ENCODE measurements at regions of chr5 and their contacts with region 1.

Region 1: DNA sequence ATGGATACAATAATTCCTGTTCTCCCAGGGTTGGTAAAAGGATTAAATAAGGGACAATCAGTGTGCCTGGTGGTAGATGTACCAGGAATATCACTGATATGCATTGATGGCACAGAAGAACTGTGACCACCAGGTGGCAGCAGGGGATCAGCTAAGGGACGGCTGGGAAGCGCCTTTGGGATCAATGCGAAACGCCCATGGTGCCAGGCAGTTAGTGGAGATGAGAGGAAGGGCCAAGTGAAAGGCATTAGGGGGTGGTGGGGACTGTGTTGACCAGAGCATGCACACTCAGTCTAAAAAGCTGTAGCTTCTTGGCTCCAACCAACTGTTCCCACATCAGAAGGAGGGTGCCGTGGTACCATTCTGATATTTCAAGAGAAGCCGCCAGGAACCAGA is 55.6 kb downstream of the ARHGEF37 start:
- DNase-seq: no peak
- H3K4me3 ChIP-seq: no peak overlapping the region
- H3K27ac ChIP-seq: no peak overlapping the region
- H3K4me1 ChIP-seq: peaks cover 25 to 36% (median 30%) of the 10 kb centered on the region in 4 donors
- H3K27me3 ChIP-seq: no peaks in the 10 kb centered on the region
- CTCF ChIP-seq: peak; percentile 70 to 96 (median 83)
- EP300 ChIP-seq: no peak
- POLR2A ChIP-seq: no peak

Region 2: GRCh38 chr5:149381987-149382340 is 254.9 kb before region 1 on chr5:
- in situ Hi-C with region 1: no loop called
- intact Hi-C with region 1: no loop called
- DNase-seq: peak; percentile 83
- H3K4me3 ChIP-seq: peak overlapping the region in 2 of 4 donors; percentile 8 to 27
- H3K27ac ChIP-seq: peak overlapping the region; percentile 87 to 91 (median 88)
- H3K4me1 ChIP-seq: peaks cover 4 to 44% (median 22%) of the 10 kb centered on the region in 4 donors
- H3K27me3 ChIP-seq: no peaks in the 10 kb centered on the region
- CTCF ChIP-seq: peak; percentile 90 to 96 (median 94)
- EP300 ChIP-seq: no peak
- POLR2A ChIP-seq: no peak

Region 3: GRCh38 chr5:149852641-149853330 is 215.9 kb after region 1 on chr5:
- in situ Hi-C with region 1: loop called in 1 of 4 experiments (anchors 10 kb)
- intact Hi-C with region 1: loop called (anchors 5 kb)
- DNase-seq: peak; percentile 83
- H3K4me3 ChIP-seq: no peak overlapping the region
- H3K27ac ChIP-seq: peak overlapping the region; percentile 7 to 56 (median 30)
- H3K4me1 ChIP-seq: peaks cover 22 to 61% (median 39%) of the 10 kb centered on the region in 4 donors
- H3K27me3 ChIP-seq: no peaks in the 10 kb centered on the region
- CTCF ChIP-seq: peak; percentile 83 to 89 (median 86)
- EP300 ChIP-seq: no peak
- POLR2A ChIP-seq: no peak

Region 4: DNA sequence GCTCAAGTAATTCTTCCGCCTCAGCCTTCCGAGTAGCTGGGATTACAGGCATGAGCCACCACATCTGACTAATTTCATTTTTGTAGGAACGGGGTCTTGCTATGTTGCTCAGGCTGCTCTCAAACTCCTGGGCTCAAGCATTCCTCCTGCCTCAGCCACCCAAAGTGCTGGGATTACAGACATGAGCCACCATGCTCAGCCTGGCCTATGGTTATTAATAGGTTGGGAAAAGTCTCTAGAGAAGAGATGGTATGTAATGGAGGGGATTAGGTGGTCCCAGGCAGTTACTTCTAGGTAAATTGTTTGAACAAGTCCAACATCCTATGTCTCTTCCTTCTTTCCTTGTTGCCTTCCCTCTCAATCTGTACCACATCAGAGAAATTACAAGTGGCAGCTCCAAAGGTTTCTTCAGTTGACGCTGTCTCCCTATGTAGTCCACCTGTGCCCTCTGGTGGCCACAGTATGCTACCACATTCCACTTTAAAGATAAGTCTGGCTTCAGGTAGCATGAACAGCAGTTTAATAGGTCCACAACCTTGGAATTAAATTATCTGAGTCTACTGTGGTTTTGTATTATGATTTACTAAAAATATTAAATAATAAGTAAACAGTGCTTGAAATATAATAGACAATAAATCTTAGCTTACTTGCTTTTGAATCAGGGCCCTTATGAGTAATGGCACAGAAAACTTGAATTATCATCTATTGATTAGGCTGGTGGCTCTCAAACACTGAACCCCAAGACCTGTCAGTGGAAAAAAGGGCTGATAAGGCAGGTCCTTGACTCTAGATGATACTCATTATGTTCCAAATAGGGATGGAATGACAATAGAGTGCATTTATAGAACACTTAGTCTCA is 353.9 kb after region 1 on chr5:
- in situ Hi-C with region 1: loop called (anchors 10 kb)
- intact Hi-C with region 1: loop called (anchors 5 kb)
- DNase-seq: peak; percentile 83
- H3K4me3 ChIP-seq: no peak overlapping the region
- H3K27ac ChIP-seq: peak overlapping the region in 1 of 4 donors; percentile 6
- H3K4me1 ChIP-seq: peaks cover 0 to 5% (median 2%) of the 10 kb centered on the region in 4 donors
- H3K27me3 ChIP-seq: no peaks in the 10 kb centered on the region
- CTCF ChIP-seq: peak; percentile 88 to 97 (median 92)
- EP300 ChIP-seq: no peak
- POLR2A ChIP-seq: no peak

Region 5: GRCh38 chr5:150527038-150527437 is 890.2 kb after region 1 on chr5:
- in situ Hi-C with region 1: no loop called
- intact Hi-C with region 1: no loop called
- DNase-seq: no peak
- H3K4me3 ChIP-seq: no peak overlapping the region
- H3K27ac ChIP-seq: no peak overlapping the region
- H3K4me1 ChIP-seq: peaks cover 15 to 26% (median 20%) of the 10 kb centered on the region in 4 donors
- H3K27me3 ChIP-seq: no peaks in the 10 kb centered on the region
- CTCF ChIP-seq: no peak
- EP300 ChIP-seq: no peak
- POLR2A ChIP-seq: no peak

Measured in transverse colon (tissue), 4 donors.